ENCODE measurements at regions of chr5 and their contacts with region 1.

Region 1: DNA sequence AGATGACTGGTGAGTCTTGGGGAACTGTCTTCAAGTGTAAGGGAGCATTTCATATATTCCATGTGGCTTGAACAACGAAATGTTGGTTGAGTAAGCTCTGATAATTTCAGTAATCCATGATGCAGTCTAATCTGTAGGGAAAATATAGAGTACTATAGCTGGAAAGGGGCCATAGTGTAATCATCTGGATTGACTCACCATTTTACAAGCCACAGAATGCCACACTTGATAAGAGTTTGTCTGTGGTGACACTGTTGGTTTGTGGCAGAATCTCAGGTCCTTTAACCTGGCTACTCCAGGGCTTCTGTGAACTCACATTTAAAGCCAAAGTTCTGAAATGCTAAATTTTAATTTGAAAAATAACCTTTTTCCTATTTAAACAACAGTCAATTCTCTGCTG is 16.3 kb upstream of the MAML1 start:
- DNase-seq: no peak
- ATAC-seq: no peak
- H3K4me3 ChIP-seq: no peak overlapping the region
- H3K27ac ChIP-seq: no peak overlapping the region
- H3K4me1 ChIP-seq: no peaks in the 10 kb centered on the region
- H3K27me3 ChIP-seq: no peaks in the 10 kb centered on the region
- CTCF ChIP-seq: no peak
- EP300 ChIP-seq: no peak
- POLR2A ChIP-seq: no peak
- RAD21 ChIP-seq: no peak

Region 2: GRCh38 chr5:179732417-179732917 is 16.2 kb after region 1 on chr5 and contains the start of gene MAML1:
- CTCF ChIA-PET with region 1: no interaction called
- POLR2A ChIA-PET with region 1: interaction called, 10 read pairs
- in situ Hi-C with region 1: no loop called
- intact Hi-C with region 1: no loop called
- DNase-seq: peak; percentile 99 to 100 (median 99)
- ATAC-seq: peak; percentile 96
- H3K4me3 ChIP-seq: peak within 1 kb of the TSS; percentile 89
- H3K27ac ChIP-seq: peak within 1 kb of the TSS; percentile 86
- H3K4me1 ChIP-seq: peaks cover 13 to 18% of the 10 kb centered on the region in 2 experiments
- H3K27me3 ChIP-seq: no peaks in the 10 kb centered on the region
- CTCF ChIP-seq: no peak
- EP300 ChIP-seq: no peak
- POLR2A ChIP-seq: peak; percentile 81
- RAD21 ChIP-seq: 0 out of 4 replicates have a peak, but pooled peaks of 1 of the 2 experiments have one; percentile 9
- polyA plus RNA-seq, gene MAML1: 0.32 to 0.45 TPM